WTC11 (cell line): ENCODE measurements at regions of chr10 and their contacts with region 1.

Region 1: DNA sequence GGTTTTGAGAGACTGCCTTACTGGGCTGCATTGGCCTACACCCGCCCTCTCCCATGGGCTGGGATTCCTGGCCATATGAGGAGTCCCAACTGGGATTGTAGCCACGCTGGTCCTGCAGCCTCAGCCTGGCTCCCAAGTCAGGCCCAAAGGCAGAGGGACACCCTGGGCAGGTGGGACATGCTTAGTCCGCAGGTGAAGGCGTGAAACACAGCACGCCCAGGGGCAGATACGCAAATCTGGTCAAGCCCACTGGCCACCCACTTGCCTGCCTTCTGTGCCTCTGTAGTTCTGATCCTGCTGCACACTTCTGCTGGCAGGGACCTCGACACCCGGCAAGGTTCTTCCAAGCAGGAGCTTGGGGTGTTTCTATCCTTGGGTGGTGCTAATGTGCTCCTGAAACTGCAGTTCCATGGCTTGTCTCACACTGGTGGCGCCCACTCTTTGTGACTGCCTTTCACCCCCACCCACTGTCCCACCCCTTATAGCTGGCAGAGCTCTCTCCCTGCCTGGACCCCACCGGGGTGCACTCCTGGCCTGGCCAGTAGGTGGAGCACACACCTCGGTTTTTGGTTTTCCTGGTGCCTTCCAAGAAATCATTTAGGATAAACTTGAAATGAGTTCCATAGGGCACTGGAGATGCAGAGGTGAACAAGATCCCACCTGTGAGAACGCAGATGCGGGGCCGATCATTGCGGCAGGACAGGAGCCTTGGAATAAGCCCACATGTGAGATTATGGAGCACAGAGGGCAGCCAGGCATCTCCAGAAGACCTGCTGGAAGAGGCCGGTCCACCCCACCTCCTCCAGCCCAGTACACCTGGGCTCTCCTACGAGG is 47.9 kb downstream of the MKI67 start:
- DNase-seq: peak; percentile 75
- ATAC-seq: peak; percentile 90
- H3K4me3 Mint-ChIP-seq: no peak overlapping the region
- H3K27ac Mint-ChIP-seq: no peak overlapping the region
- H3K4me1 Mint-ChIP-seq: peaks cover 10% of the 10 kb centered on the region; the same call in 1 of the 2 replicates
- H3K27me3 Mint-ChIP-seq: no peaks in the 10 kb centered on the region
- CTCF ChIP-seq: peak; percentile 62

Region 2: DNA sequence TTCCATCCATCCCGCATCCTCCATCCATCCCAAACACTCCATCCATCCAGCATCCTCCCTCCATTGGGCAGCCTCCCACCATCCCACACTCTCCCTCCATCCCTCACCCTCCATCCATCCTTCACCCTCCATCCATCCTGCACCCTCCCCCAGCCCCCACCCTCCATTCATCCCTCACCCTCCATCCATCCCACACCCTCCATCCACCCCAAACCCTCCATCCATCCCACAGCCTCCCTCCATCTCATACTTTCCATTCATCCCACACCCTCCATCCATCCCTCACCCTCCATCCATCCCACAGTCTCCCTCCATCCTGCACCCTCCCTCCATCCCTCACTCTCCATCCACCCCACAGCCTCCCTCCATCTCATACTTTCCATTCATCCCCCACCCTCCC is 281.0 kb before region 1 on chr10:
- CTCF ChIA-PET with region 1: no interaction called
- POLR2A ChIA-PET with region 1: no interaction called
- DNase-seq: no peak
- ATAC-seq: no peak
- H3K4me3 Mint-ChIP-seq: no peak overlapping the region
- H3K27ac Mint-ChIP-seq: no peak overlapping the region
- H3K4me1 Mint-ChIP-seq: no peaks in the 10 kb centered on the region
- H3K27me3 Mint-ChIP-seq: peaks cover 5% of the 10 kb centered on the region; the same call in 1 of the 2 replicates
- CTCF ChIP-seq: no peak

Region 3: GRCh38 chr10:128064108-128064969 is 14.0 kb before region 1 on chr10:
- CTCF ChIA-PET with region 1: interaction called, 20 read pairs
- POLR2A ChIA-PET with region 1: no interaction called
- DNase-seq: no peak
- ATAC-seq: no peak
- H3K4me3 Mint-ChIP-seq: no peak overlapping the region
- H3K27ac Mint-ChIP-seq: no peak overlapping the region
- H3K4me1 Mint-ChIP-seq: peaks cover 29% of the 10 kb centered on the region
- H3K27me3 Mint-ChIP-seq: no peaks in the 10 kb centered on the region
- CTCF ChIP-seq: no peak

Region 4: DNA sequence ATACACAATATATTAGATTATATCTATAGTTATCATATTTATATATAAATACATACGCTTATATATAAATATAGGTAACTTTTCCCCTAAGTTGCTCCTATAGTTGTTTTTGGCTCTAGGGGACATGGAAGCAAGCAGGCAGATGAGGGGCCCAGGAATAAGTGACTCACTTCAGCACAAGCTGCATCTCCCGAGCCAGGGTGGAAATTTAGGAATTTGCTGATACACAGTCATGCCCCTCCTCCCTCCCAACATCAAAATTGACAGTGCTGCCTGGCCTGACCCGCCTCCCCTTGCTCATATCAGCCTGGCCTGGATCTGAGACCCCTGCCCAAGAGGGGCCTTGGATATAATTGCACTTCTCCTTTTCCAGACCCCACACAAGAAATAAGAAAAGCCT is 14.1 kb after region 1 on chr10:
- CTCF ChIA-PET with region 1: interaction called, 77 read pairs
- POLR2A ChIA-PET with region 1: no interaction called
- DNase-seq: no peak
- ATAC-seq: no peak
- H3K4me3 Mint-ChIP-seq: no peak overlapping the region
- H3K27ac Mint-ChIP-seq: no peak overlapping the region
- H3K4me1 Mint-ChIP-seq: peaks cover 15% of the 10 kb centered on the region
- H3K27me3 Mint-ChIP-seq: no peaks in the 10 kb centered on the region
- CTCF ChIP-seq: no peak

Region 5: GRCh38 chr10:128102480-128103228 is 24.3 kb after region 1 on chr10:
- CTCF ChIA-PET with region 1: no interaction called
- POLR2A ChIA-PET with region 1: no interaction called
- DNase-seq: no peak
- ATAC-seq: no peak
- H3K4me3 Mint-ChIP-seq: no peak overlapping the region
- H3K27ac Mint-ChIP-seq: no peak overlapping the region
- H3K4me1 Mint-ChIP-seq: no peaks in the 10 kb centered on the region
- H3K27me3 Mint-ChIP-seq: no peaks in the 10 kb centered on the region
- CTCF ChIP-seq: no peak

Region 6: GRCh38 chr10:128660726-128661125 is 582.4 kb after region 1 on chr10:
- CTCF ChIA-PET with region 1: no interaction called
- POLR2A ChIA-PET with region 1: no interaction called
- DNase-seq: no peak
- ATAC-seq: peak; percentile 24; the same call in 1 of the 2 replicates
- H3K4me3 Mint-ChIP-seq: no peak overlapping the region
- H3K27ac Mint-ChIP-seq: no peak overlapping the region
- H3K4me1 Mint-ChIP-seq: peaks cover 11% of the 10 kb centered on the region
- H3K27me3 Mint-ChIP-seq: no peaks in the 10 kb centered on the region
- CTCF ChIP-seq: no peak